Activated CD4-positive, alpha-beta T cell treated with anti-CD3 and anti-CD28 coated beads, Interleukin-2, amount 10 ng/mL, durations not matched to agents 24 days and 14 days (primary cell): ENCODE measurements at regions of chr17 and their contacts with region 1.

Region 1: GRCh38 chr17:8156246-8156992 is 4.2 kb upstream of the PER1 start:
- DNase-seq: peak; percentile 100
- H3K4me3 Mint-ChIP-seq: no peak overlapping the region
- H3K27ac Mint-ChIP-seq: no peak overlapping the region
- H3K4me1 Mint-ChIP-seq: peaks cover 62% of the 10 kb centered on the region
- H3K27me3 Mint-ChIP-seq: no peaks in the 10 kb centered on the region

Region 2: GRCh38 chr17:8091033-8091687 is 65.3 kb before region 1 on chr17:
- intact Hi-C with region 1: no loop called
- DNase-seq: no peak
- H3K4me3 Mint-ChIP-seq: no peak overlapping the region
- H3K27ac Mint-ChIP-seq: no peak overlapping the region
- H3K4me1 Mint-ChIP-seq: peaks cover 8% of the 10 kb centered on the region
- H3K27me3 Mint-ChIP-seq: peaks cover 28% of the 10 kb centered on the region

Region 3: DNA sequence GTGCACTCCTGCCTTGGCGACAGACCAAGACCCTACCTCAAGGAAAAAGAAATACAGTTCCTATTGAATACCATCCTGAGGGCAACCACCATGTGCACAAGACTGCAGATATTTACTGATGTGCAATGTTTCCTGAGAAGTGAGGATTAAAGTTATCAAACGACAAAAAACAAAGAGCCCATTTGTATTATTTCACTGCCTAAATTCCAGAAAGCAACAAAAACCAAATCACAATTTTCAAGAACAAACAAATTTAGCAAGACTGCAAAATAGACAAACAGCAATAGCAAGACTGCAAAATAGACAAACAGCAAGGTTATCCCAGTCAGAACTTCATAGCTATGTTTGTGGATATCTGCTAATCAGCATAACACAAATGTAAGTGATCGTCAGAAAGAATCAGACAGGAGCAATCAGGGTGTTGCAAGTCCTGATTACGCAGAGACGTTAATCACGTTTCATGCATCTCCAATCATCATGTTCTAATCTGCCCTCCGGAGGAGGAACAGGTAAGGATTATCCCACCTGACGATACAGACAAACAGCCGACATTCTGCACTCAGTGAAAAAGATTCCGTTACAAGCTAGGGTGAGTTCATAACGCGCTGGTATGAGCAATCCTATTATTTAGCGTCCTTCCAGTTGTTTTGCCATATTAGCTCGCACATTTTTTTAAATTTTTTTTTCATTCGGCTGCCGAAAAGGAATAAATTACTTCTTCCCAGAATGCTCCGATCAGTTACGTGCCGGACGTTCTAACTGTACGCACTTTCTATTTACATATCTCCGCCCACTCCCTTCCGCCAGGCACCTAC is 16.8 kb after region 1 on chr17:
- intact Hi-C with region 1: loop called (anchors 1 kb)
- DNase-seq: peak; percentile 93
- H3K4me3 Mint-ChIP-seq: peak overlapping the region; percentile 98
- H3K27ac Mint-ChIP-seq: peak overlapping the region; percentile 99
- H3K4me1 Mint-ChIP-seq: peaks cover 38% of the 10 kb centered on the region
- H3K27me3 Mint-ChIP-seq: no peaks in the 10 kb centered on the region

Region 4: DNA sequence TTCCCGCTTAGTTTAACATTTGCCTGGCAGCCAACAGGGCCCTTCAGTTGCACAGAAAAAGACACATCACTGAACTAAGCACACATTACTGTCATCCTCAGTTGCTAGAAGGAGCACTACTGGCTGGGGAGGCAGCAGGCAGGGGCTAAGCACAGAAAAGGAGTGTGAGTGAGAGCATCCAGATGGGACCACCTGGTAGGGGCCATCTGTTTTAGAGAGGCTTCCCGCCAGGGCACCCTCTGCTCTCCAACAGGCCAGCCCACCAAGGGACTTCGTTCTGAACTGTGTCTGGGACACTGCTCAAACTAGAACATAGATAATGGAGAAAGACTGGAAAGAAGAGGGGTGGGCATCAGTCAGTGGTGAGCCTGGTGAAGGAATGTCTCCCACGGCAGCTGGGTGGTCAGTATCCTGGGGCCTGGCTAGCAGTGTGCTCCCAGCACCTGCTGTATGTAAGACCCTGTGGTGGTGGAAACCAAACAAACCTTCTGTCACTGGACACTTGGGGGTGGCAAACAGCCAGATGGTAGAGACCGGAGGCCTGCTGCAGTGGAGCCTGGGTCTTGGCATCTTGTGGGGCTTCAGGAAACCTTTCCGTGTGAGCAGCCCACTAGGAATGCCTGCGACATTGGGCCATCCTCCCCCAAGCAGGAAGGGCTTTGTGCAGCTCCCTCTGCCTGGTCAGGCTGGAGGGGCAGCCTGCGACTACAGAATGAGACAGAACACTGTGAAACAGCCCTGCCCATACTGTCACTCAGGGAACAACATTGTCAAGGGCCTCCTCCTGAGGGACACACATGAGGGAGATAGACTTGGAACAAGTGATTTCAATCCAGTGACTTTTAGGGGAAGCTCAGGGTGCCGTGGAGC is 119.2 kb after region 1 on chr17:
- intact Hi-C with region 1: no loop called
- DNase-seq: no peak
- H3K4me3 Mint-ChIP-seq: no peak overlapping the region
- H3K27ac Mint-ChIP-seq: no peak overlapping the region
- H3K4me1 Mint-ChIP-seq: peaks cover 2% of the 10 kb centered on the region
- H3K27me3 Mint-ChIP-seq: no peaks in the 10 kb centered on the region